Vagina (tissue), 2 donors: ENCODE measurements at regions of chr11 and their contacts with region 1.

Region 1: GRCh38 chr11:22304337-22304961 is 33.7 kb upstream of the SLC17A6 start:
- DNase-seq: no peak
- H3K4me3 ChIP-seq: no peak overlapping the region
- H3K27ac ChIP-seq: no peak overlapping the region
- H3K4me1 ChIP-seq: no peaks in the 10 kb centered on the region
- H3K27me3 ChIP-seq: no peaks in the 10 kb centered on the region
- CTCF ChIP-seq: peak; percentile 19 to 59 (median 30)
- POLR2A ChIP-seq: no peak

Region 2: GRCh38 chr11:20647976-20648565 is 1656.4 kb before region 1 on chr11:
- intact Hi-C with region 1: loop called (anchors 10 kb)
- DNase-seq: no peak
- H3K4me3 ChIP-seq: no peak overlapping the region
- H3K27ac ChIP-seq: no peak overlapping the region
- H3K4me1 ChIP-seq: no peaks in the 10 kb centered on the region
- H3K27me3 ChIP-seq: no peaks in the 10 kb centered on the region
- CTCF ChIP-seq: peak; percentile 56 to 81 (median 73)
- POLR2A ChIP-seq: no peak